HCT116 (cell line): ENCODE measurements at regions of chr13 and their contacts with region 1.

Region 1: GRCh38 chr13:31909864-31910551 is 121.6 kb upstream of the FRY start:
- DNase-seq: peak; percentile 41
- ATAC-seq: peak; percentile 75
- H3K4me3 ChIP-seq: no peak overlapping the region
- H3K27ac ChIP-seq: no peak overlapping the region
- H3K4me1 ChIP-seq: no peaks in the 10 kb centered on the region
- H3K27me3 ChIP-seq: peaks cover 16% of the 10 kb centered on the region
- CTCF ChIP-seq: peak; percentile 56 to 90 (median 80); a peak in 5 of 6 replicates
- POLR2A ChIP-seq: no peak
- RAD21 ChIP-seq: peak; percentile 78

Region 2: GRCh38 chr13:31605076-31605858 is 304.7 kb before region 1 on chr13:
- CTCF ChIA-PET with region 1: no interaction called
- POLR2A ChIA-PET with region 1: no interaction called
- RAD21 ChIA-PET with region 1: no interaction called
- intact Hi-C with region 1: no loop called
- DNase-seq: no peak
- ATAC-seq: no peak
- H3K4me3 ChIP-seq: no peak overlapping the region
- H3K27ac ChIP-seq: no peak overlapping the region
- H3K4me1 ChIP-seq: no peaks in the 10 kb centered on the region
- H3K27me3 ChIP-seq: peaks cover 7% of the 10 kb centered on the region; the same call in 1 of the 2 replicates
- CTCF ChIP-seq: no peak
- POLR2A ChIP-seq: no peak
- RAD21 ChIP-seq: no peak

Region 3: DNA sequence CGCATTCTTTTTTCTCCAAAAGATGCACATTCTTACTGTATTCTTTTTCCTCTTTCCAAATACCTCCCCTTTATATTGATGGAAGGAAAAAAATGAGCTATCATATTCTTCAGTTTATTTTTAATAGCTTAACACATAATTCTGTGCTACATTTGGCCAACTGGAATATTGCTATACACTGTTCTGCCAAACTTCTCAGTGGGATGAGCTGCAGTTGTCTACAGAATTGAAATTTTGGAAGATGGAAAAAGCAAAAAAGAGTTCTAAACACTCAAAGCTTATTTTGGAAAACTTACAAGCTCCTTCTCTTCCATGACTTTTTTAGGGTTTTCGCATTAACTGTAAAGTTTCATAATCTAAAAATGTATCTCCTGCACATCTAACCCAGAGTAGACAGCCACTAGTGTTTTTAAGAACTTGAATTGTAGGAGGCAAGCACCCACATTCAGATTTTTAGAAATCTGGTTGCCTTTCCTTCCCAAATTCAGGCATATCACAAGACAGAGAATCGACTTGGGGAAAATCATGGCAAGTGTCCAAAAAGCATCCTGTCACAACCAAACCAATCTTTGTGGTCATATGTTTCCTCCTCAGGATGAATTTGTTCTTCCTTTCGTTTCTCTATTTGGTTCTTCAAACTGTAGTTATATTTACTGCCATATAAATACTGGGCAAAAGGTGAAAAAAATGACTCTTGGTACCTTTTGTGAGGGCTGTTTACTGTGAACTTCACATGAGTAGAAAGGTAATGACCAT is 10.1 kb after region 1 on chr13:
- CTCF ChIA-PET with region 1: interaction called, 21 read pairs
- POLR2A ChIA-PET with region 1: interaction called, 3 read pairs
- RAD21 ChIA-PET with region 1: no interaction called
- intact Hi-C with region 1: no loop called
- DNase-seq: no peak
- ATAC-seq: no peak
- H3K4me3 ChIP-seq: no peak overlapping the region
- H3K27ac ChIP-seq: no peak overlapping the region
- H3K4me1 ChIP-seq: no peaks in the 10 kb centered on the region
- H3K27me3 ChIP-seq: no peaks in the 10 kb centered on the region
- CTCF ChIP-seq: no peak
- POLR2A ChIP-seq: no peak
- RAD21 ChIP-seq: no peak

Region 4: DNA sequence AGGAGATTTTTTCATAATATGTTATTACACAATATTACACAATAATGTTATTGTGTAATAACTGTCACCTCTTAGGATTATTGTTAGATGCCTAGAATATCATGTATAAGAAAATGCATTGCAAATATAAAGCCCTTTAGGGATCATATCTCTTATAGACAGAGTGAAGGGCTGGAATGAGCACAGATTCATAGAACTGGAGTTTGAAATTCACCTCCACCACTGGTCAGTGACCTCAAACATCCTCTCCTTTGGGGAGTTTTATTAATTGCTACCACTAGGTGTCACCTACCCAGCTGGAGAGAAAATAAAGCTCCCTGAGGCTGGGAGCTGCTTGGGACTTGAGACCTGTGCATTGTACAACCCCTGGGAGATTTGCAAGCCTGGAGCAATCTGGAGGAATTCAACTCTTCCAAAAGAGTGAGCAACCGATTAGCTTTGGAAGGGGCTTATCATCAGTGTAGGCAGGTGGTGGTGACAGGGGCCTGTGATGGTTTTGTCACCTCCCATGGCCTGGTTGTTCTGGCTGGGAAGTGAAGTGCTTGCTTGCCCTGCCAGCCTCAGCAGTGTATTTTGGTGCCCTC is 91.3 kb after region 1 on chr13:
- CTCF ChIA-PET with region 1: interaction called, 12 read pairs
- POLR2A ChIA-PET with region 1: no interaction called
- RAD21 ChIA-PET with region 1: no interaction called
- intact Hi-C with region 1: no loop called
- DNase-seq: peak; percentile 22
- ATAC-seq: peak; percentile 93
- H3K4me3 ChIP-seq: no peak overlapping the region
- H3K27ac ChIP-seq: no peak overlapping the region
- H3K4me1 ChIP-seq: no peaks in the 10 kb centered on the region
- H3K27me3 ChIP-seq: no peaks in the 10 kb centered on the region
- CTCF ChIP-seq: peak in 2 of 3 experiments; percentile 57 to 70; a peak in 4 of 6 replicates
- POLR2A ChIP-seq: no peak
- RAD21 ChIP-seq: peak; percentile 38; the same call in 1 of the 2 replicates

Region 5: DNA sequence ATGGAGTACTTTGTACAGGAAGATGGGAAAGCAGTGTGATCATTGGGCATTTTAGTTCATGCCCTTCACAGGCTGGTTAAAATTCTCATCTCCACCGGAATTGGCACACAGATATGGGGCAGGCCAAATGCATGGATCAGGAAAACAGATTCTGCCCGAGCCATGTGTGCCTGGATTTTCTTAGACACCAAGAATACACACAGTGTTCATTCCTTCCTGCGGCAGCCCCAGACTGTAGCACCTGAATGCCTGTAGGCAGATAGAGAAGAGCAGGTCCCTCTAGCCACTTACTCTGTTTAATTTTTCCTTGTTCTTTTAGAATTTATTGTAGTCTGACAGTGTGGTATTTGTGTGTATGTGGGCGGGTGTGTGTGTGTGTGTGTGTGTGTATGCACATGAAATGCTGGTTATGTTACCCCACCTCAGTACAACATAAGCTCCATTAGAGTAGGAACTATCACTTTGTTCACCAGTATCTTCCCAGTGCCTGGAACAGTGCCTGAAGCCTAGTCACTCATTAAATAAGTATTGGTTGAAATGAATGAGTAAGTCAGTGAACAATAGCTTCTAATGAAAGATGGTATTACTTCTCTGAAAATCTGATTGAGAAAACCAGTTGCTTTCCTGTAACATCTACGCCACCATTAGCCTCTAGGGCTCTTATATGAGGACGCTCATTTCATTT is 163.3 kb after region 1 on chr13:
- CTCF ChIA-PET with region 1: no interaction called
- POLR2A ChIA-PET with region 1: no interaction called
- RAD21 ChIA-PET with region 1: no interaction called
- intact Hi-C with region 1: no loop called
- DNase-seq: no peak
- ATAC-seq: no peak
- H3K4me3 ChIP-seq: no peak overlapping the region
- H3K27ac ChIP-seq: no peak overlapping the region
- H3K4me1 ChIP-seq: no peaks in the 10 kb centered on the region
- H3K27me3 ChIP-seq: no peaks in the 10 kb centered on the region
- CTCF ChIP-seq: no peak
- POLR2A ChIP-seq: no peak
- RAD21 ChIP-seq: no peak

Region 6: GRCh38 chr13:32246468-32246867 is 336.5 kb after region 1 on chr13:
- CTCF ChIA-PET with region 1: interaction called, 14 read pairs
- POLR2A ChIA-PET with region 1: no interaction called
- RAD21 ChIA-PET with region 1: no interaction called
- intact Hi-C with region 1: no loop called
- DNase-seq: peak; percentile 66
- ATAC-seq: peak; percentile 100
- H3K4me3 ChIP-seq: no peak overlapping the region
- H3K27ac ChIP-seq: no peak overlapping the region
- H3K4me1 ChIP-seq: peaks cover 0 to 5% of the 10 kb centered on the region in 2 experiments; a peak in 1 of 4 replicates
- H3K27me3 ChIP-seq: no peaks in the 10 kb centered on the region
- CTCF ChIP-seq: peak; percentile 49 to 89 (median 79); a peak in 5 of 6 replicates
- POLR2A ChIP-seq: no peak
- RAD21 ChIP-seq: peak; percentile 53

Region 7: DNA sequence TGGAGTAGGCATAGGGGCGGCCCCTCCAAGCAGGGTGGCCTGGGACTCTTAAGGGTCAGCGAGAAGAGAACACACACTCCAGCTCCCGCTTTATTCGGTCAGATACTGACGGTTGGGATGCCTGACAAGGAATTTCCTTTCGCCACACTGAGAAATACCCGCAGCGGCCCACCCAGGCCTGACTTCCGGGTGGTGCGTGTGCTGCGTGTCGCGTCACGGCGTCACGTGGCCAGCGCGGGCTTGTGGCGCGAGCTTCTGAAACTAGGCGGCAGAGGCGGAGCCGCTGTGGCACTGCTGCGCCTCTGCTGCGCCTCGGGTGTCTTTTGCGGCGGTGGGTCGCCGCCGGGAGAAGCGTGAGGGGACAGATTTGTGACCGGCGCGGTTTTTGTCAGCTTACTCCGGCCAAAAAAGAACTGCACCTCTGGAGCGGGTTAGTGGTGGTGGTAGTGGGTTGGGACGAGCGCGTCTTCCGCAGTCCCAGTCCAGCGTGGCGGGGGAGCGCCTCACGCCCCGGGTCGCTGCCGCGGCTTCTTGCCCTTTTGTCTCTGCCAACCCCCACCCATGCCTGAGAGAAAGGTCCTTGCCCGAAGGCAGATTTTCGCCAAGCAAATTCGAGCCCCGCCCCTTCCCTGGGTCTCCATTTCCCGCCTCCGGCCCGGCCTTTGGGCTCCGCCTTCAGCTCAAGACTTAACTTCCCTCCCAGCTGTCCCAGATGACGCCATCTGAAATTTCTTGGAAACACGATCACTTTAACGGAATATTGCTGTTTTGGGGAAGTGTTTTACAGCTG is 405.4 kb after region 1 on chr13 and contains the starts of genes BRCA2 and ZAR1L:
- CTCF ChIA-PET with region 1: interaction called, 13 read pairs
- POLR2A ChIA-PET with region 1: no interaction called
- RAD21 ChIA-PET with region 1: interaction called in 1 of 2 experiments, 3 read pairs
- intact Hi-C with region 1: loop called (anchors 1 kb)
- DNase-seq: peak; percentile 77
- ATAC-seq: peak; percentile 96
- H3K4me3 ChIP-seq: peak within 1 kb of the TSS; percentile 68 to 82
- H3K27ac ChIP-seq: peak within 1 kb of the TSS; percentile 82
- H3K4me1 ChIP-seq: peaks cover 7 to 16% of the 10 kb centered on the region in 2 experiments
- H3K27me3 ChIP-seq: no peaks in the 10 kb centered on the region
- CTCF ChIP-seq: no peak
- POLR2A ChIP-seq: peak; percentile 86
- RAD21 ChIP-seq: no peak
- total RNA-seq, gene BRCA2: 14.2 TPM
- total RNA-seq, gene ZAR1L: 0.15 TPM